ENCODE measurements at regions of chr6 and their contacts with region 1.

Region 1: GRCh38 chr6:50128420-50129005 is 78.8 kb upstream of the DEFB112 start:
- H3K4me3 ChIP-seq: no peak overlapping the region
- H3K27ac ChIP-seq: no peak overlapping the region
- H3K4me1 ChIP-seq: no peaks in the 10 kb centered on the region
- CTCF ChIP-seq: no peak

Region 2: GRCh38 chr6:50110557-50110956 is 18.0 kb before region 1 on chr6:
- CTCF ChIA-PET with region 1: interaction called, 11 read pairs
- POLR2A ChIA-PET with region 1: no interaction called
- H3K4me3 ChIP-seq: no peak overlapping the region
- H3K27ac ChIP-seq: no peak overlapping the region
- H3K4me1 ChIP-seq: no peaks in the 10 kb centered on the region
- CTCF ChIP-seq: no peak

Region 3: GRCh38 chr6:50180646-50181045 is 52.1 kb after region 1 on chr6:
- CTCF ChIA-PET with region 1: no interaction called
- POLR2A ChIA-PET with region 1: no interaction called
- H3K4me3 ChIP-seq: no peak overlapping the region
- H3K27ac ChIP-seq: no peak overlapping the region
- H3K4me1 ChIP-seq: no peaks in the 10 kb centered on the region
- CTCF ChIP-seq: no peak

Region 4: GRCh38 chr6:50602292-50602691 is 473.8 kb after region 1 on chr6:
- CTCF ChIA-PET with region 1: interaction called, 18 read pairs
- POLR2A ChIA-PET with region 1: no interaction called
- H3K4me3 ChIP-seq: no peak overlapping the region
- H3K27ac ChIP-seq: no peak overlapping the region
- H3K4me1 ChIP-seq: no peaks in the 10 kb centered on the region
- CTCF ChIP-seq: no peak